ENCODE measurements at regions of chr7 and their contacts with region 1.

Region 1: GRCh38 chr7:93461350-93461749 is 113.2 kb downstream of the CALCR start:
- DNase-seq: peak; percentile 21
- ATAC-seq: no peak
- H3K4me3 ChIP-seq: no peak overlapping the region
- H3K4me3 Mint-ChIP-seq: no peak overlapping the region
- H3K27ac ChIP-seq: no peak overlapping the region
- H3K27ac Mint-ChIP-seq: no peak overlapping the region
- H3K4me1 ChIP-seq: no peaks in the 10 kb centered on the region
- H3K4me1 Mint-ChIP-seq: no peaks in the 10 kb centered on the region
- H3K27me3 ChIP-seq: no peaks in the 10 kb centered on the region
- H3K27me3 Mint-ChIP-seq: peaks cover 21% of the 10 kb centered on the region
- CTCF ChIP-seq: peak; percentile 23

Region 2: GRCh38 chr7:92292981-92293380 is 1168.4 kb before region 1 on chr7:
- CTCF ChIA-PET with region 1: no interaction called
- POLR2A ChIA-PET with region 1: no interaction called
- intact Hi-C with region 1: no loop called
- DNase-seq: no peak
- ATAC-seq: no peak
- H3K4me3 ChIP-seq: no peak overlapping the region
- H3K4me3 Mint-ChIP-seq: no peak overlapping the region
- H3K27ac ChIP-seq: no peak overlapping the region
- H3K27ac Mint-ChIP-seq: no peak overlapping the region
- H3K4me1 ChIP-seq: peaks cover 0 to 3% of the 10 kb centered on the region in 2 donors
- H3K4me1 Mint-ChIP-seq: peaks cover 25% of the 10 kb centered on the region
- H3K27me3 ChIP-seq: no peaks in the 10 kb centered on the region
- H3K27me3 Mint-ChIP-seq: no peaks in the 10 kb centered on the region
- CTCF ChIP-seq: no peak

Region 3: DNA sequence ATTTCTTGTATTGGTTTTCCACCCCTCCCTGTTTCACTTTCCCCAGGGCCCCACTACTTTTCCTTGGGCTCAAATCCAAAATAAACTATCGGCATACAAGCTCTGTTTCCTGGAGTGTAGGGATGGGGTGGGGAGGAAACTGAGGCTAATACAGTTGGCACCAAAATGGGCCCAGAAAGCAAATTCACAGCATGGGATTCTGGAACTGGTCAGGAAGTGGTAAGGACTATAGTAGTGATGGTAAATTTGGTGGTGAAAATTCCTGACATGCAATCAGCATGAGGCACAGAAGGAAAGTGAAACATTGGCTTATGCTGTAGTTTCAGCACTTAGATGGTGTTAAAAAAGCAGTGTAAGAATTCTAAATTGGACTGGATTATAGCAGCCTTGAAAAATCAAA is 304.5 kb before region 1 on chr7:
- CTCF ChIA-PET with region 1: no interaction called
- POLR2A ChIA-PET with region 1: no interaction called
- intact Hi-C with region 1: no loop called
- DNase-seq: no peak
- ATAC-seq: no peak
- H3K4me3 ChIP-seq: no peak overlapping the region
- H3K4me3 Mint-ChIP-seq: no peak overlapping the region
- H3K27ac ChIP-seq: no peak overlapping the region
- H3K27ac Mint-ChIP-seq: no peak overlapping the region
- H3K4me1 ChIP-seq: no peaks in the 10 kb centered on the region
- H3K4me1 Mint-ChIP-seq: no peaks in the 10 kb centered on the region
- H3K27me3 ChIP-seq: no peaks in the 10 kb centered on the region
- H3K27me3 Mint-ChIP-seq: no peaks in the 10 kb centered on the region
- CTCF ChIP-seq: no peak

Region 4: DNA sequence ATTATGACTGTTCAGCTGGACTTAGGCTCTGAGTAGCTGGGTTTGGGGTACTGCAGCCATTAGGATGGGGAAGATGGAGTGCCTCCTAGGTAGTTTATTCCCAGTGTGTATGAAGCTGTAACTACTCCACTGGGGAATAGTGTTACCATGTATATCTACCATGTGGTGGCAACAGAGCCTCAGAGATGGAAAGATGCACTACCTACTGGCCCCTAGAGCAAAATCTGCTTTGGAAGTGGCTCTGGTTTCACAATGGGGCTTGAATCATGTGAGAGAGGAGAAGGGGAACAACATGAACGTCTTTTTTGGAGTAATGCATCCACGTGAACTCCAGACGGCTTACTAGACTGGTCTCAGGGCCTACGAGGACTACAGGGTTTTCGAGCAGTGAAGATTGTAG is 54.1 kb before region 1 on chr7:
- CTCF ChIA-PET with region 1: no interaction called
- POLR2A ChIA-PET with region 1: no interaction called
- intact Hi-C with region 1: loop called (anchors 10 kb)
- DNase-seq: no peak
- ATAC-seq: no peak
- H3K4me3 ChIP-seq: no peak overlapping the region
- H3K4me3 Mint-ChIP-seq: no peak overlapping the region
- H3K27ac ChIP-seq: no peak overlapping the region
- H3K27ac Mint-ChIP-seq: no peak overlapping the region
- H3K4me1 ChIP-seq: no peaks in the 10 kb centered on the region
- H3K4me1 Mint-ChIP-seq: no peaks in the 10 kb centered on the region
- H3K27me3 ChIP-seq: no peaks in the 10 kb centered on the region
- H3K27me3 Mint-ChIP-seq: no peaks in the 10 kb centered on the region
- CTCF ChIP-seq: no peak

Region 5: DNA sequence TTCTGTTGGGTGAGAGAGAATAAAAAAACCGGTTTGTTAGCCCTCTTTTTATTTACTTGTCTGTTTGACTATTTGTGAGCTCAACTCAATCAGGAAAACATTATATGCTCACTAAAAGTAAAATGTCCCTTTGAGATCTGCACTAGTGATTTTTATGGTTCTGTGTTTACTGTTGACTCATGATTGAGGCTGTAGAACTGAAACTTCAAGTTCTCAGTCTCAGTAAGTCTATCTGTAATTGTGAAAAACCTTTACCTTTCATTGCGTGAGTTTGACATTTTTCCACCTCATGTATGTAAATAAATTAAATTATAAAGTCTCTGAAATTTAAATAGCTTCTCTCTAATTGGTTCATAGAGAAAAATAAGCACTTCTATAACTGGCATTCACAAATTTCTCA is 1031.2 kb after region 1 on chr7:
- CTCF ChIA-PET with region 1: no interaction called
- POLR2A ChIA-PET with region 1: no interaction called
- intact Hi-C with region 1: no loop called
- DNase-seq: no peak
- ATAC-seq: no peak
- H3K4me3 ChIP-seq: no peak overlapping the region
- H3K4me3 Mint-ChIP-seq: no peak overlapping the region
- H3K27ac ChIP-seq: no peak overlapping the region
- H3K27ac Mint-ChIP-seq: no peak overlapping the region
- H3K4me1 ChIP-seq: no peaks in the 10 kb centered on the region
- H3K4me1 Mint-ChIP-seq: no peaks in the 10 kb centered on the region
- H3K27me3 ChIP-seq: peaks cover 0 to 7% (median 3%) of the 10 kb centered on the region in 4 experiments
- H3K27me3 Mint-ChIP-seq: peaks cover 39% of the 10 kb centered on the region
- CTCF ChIP-seq: no peak